Posterior vena cava (tissue), 2 donors: ENCODE measurements at regions of chr13 and their contacts with region 1.

Region 1: GRCh38 chr13:82625717-82626116 is 1256.6 kb downstream of the SLITRK1 start:
- DNase-seq: no peak

Region 2: DNA sequence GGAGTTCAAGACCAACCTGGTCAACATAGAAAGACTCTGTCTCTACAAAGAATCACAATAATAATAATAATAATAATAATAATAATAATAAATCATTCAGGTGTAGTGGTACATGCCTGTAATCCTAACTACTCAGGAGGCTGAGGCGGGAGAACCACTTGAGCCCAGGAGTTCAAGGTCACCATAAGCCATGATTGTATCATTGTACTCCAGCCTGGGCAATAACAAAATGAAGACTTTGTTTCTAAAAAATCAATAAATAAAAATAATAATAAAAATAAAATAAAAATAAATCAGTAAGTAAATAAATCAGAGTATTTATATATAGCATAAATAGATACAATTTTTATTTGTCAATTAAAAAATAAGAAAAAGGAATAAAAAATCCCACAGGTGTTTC is 379.9 kb before region 1 on chr13:
- intact Hi-C with region 1: no loop called
- DNase-seq: no peak

Region 3: GRCh38 chr13:82688400-82688994 is 62.8 kb after region 1 on chr13:
- intact Hi-C with region 1: loop called in 1 of 2 experiments (anchors 2 kb)
- DNase-seq: no peak